ENCODE measurements at regions of chr20 and their contacts with region 1.

Region 1: GRCh38 chr20:45011108-45011526 is 44.8 kb downstream of the STK4 start:
- DNase-seq: no peak
- H3K4me3 ChIP-seq: no peak overlapping the region
- CTCF ChIP-seq: peak; percentile 54

Region 2: GRCh38 chr20:44997171-44998067 is 13.7 kb before region 1 on chr20:
- CTCF ChIA-PET with region 1: interaction called, 40 read pairs
- POLR2A ChIA-PET with region 1: no interaction called
- DNase-seq: no peak
- H3K4me3 ChIP-seq: no peak overlapping the region
- CTCF ChIP-seq: no peak

Region 3: DNA sequence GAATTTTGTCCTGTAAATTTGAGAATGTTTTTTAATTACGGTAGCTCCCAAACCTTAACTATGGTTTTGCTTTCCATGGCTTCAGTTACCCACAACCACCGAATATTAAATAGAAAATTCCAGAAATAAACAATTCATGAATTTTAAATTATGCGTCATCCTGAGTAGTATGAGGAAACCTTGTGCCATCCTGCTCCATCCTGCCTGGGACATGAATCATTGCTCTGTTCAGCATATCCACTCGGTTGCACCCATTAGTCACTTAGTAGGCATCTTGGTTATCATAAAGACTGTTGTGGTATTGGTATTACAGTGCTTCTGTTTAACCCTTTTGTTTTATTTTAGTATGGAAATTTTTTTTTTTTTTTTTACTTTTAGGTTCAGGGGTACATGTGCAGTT is 50.1 kb after region 1 on chr20:
- CTCF ChIA-PET with region 1: interaction called, 12 read pairs
- POLR2A ChIA-PET with region 1: no interaction called
- DNase-seq: peak; percentile 61
- H3K4me3 ChIP-seq: no peak overlapping the region
- CTCF ChIP-seq: no peak

Region 4: DNA sequence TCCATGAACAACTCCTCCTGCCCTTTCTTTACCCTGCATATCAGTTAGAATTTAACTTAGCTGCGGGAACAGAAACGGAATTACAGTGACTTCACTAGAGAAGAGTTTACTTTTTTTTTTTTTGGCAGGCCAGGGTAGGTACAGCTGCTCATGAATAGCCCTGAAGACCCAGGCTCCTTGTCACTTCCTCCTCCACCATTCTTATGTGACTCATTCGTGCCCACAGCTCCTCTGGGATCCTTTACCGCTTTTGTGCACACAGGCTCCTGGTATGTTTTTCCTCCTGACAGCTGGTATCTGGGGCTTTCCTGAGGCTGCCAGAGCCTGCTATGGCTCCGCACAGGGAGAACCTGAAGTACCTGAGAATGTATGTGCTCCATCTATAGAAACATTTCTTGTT is 93.7 kb after region 1 on chr20:
- CTCF ChIA-PET with region 1: interaction called, 30 read pairs
- POLR2A ChIA-PET with region 1: no interaction called
- DNase-seq: peak; percentile 47
- H3K4me3 ChIP-seq: no peak overlapping the region
- CTCF ChIP-seq: no peak

Region 5: DNA sequence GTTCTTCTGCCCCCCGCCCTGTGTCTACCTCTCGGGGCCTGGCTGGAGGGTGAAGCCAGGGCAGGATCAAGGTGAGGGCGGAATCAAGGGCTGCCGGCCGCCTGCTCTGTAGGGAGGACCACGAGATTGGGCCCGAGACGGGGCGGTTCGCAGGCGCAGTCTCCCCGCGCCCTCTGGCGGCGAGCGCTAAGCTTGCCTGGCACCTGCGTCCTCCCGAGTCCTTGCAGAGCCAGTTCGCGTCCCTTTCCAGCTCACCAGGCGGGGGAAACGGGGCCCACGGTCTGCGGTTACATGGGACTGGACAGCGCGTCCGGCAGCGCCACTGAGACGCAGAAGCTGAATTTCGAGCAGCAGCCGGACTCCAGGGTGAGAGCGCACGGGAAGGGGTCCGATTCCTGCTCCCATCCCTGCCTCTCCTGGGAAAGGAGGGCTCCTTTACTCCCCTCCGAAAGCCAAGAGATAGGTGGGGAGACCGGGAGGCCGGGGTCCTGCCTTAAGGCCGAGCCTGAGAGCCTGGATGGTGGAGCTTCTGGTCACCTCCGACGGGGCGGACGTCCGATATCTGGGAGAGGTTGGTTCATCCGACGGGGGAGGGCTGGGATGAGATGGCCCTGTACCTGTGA is 300.6 kb after region 1 on chr20:
- CTCF ChIA-PET with region 1: interaction called, 10 read pairs
- POLR2A ChIA-PET with region 1: no interaction called
- DNase-seq: no peak
- H3K4me3 ChIP-seq: no peak overlapping the region
- CTCF ChIP-seq: peak; percentile 94

Measured in AG04449 (cell line).